ENCODE measurements at regions of chr13 and their contacts with region 1.

Region 1: GRCh38 chr13:65966991-65967451 is 1263.1 kb downstream of the PCDH9 start:
- DNase-seq: peak; percentile 45 to 63
- H3K4me3 ChIP-seq: no peak overlapping the region
- H3K4me3 Mint-ChIP-seq: no peak overlapping the region
- H3K27ac Mint-ChIP-seq: no peak overlapping the region
- H3K4me1 ChIP-seq: no peaks in the 10 kb centered on the region
- H3K4me1 Mint-ChIP-seq: no peaks in the 10 kb centered on the region
- H3K27me3 ChIP-seq: no peaks in the 10 kb centered on the region
- H3K27me3 Mint-ChIP-seq: no peaks in the 10 kb centered on the region
- CTCF ChIP-seq: peak; percentile 37 to 46

Region 2: GRCh38 chr13:65656740-65657329 is 310.2 kb before region 1 on chr13:
- CTCF ChIA-PET with region 1: no interaction called
- POLR2A ChIA-PET with region 1: no interaction called
- intact Hi-C with region 1: loop called (anchors 1 kb)
- DNase-seq: no peak
- H3K4me3 ChIP-seq: no peak overlapping the region
- H3K4me3 Mint-ChIP-seq: no peak overlapping the region
- H3K27ac Mint-ChIP-seq: no peak overlapping the region
- H3K4me1 ChIP-seq: no peaks in the 10 kb centered on the region
- H3K4me1 Mint-ChIP-seq: no peaks in the 10 kb centered on the region
- H3K27me3 ChIP-seq: no peaks in the 10 kb centered on the region
- H3K27me3 Mint-ChIP-seq: peaks cover under 1% of the 10 kb centered on the region
- CTCF ChIP-seq: peak; percentile 23 to 41